ENCODE measurements at regions of chr19 and their contacts with region 1.

Region 1: GRCh38 chr19:12806239-12807081 is at the start of gene RNASEH2A:
- DNase-seq: peak; percentile 97
- H3K4me3 Mint-ChIP-seq: peak within 1 kb of the TSS; percentile 96
- H3K27ac Mint-ChIP-seq: peak within 1 kb of the TSS; percentile 89
- H3K4me1 Mint-ChIP-seq: peaks cover 20% of the 10 kb centered on the region
- H3K27me3 Mint-ChIP-seq: no peaks in the 10 kb centered on the region
- total RNA-seq, gene RNASEH2A: 35.8 and 51.5 TPM in 2 replicates

Region 2: GRCh38 chr19:12736995-12737834 is 69.2 kb before region 1 on chr19 and contains the start of gene GET3:
- intact Hi-C with region 1: loop called (anchors 1 kb)
- DNase-seq: peak; percentile 94
- H3K4me3 Mint-ChIP-seq: peak within 1 kb of the TSS; percentile 100
- H3K27ac Mint-ChIP-seq: peak within 1 kb of the TSS; percentile 98
- H3K4me1 Mint-ChIP-seq: peaks cover 38% of the 10 kb centered on the region
- H3K27me3 Mint-ChIP-seq: no peaks in the 10 kb centered on the region
- total RNA-seq, gene GET3: 64.6 and 67.3 TPM in 2 replicates

Region 3: GRCh38 chr19:12867120-12868099 is 61.0 kb after region 1 on chr19:
- intact Hi-C with region 1: no loop called
- DNase-seq: peak; percentile 93
- H3K4me3 Mint-ChIP-seq: peak overlapping the region; percentile 77
- H3K27ac Mint-ChIP-seq: peak overlapping the region; percentile 16
- H3K4me1 Mint-ChIP-seq: peaks cover 8% of the 10 kb centered on the region
- H3K27me3 Mint-ChIP-seq: peaks cover 2% of the 10 kb centered on the region

Measured in activated CD4-positive, alpha-beta T cell treated with anti-CD3 and anti-CD28 coated beads, Interleukin-2, amount 10 ng/mL, durations not matched to agents 24 days and 14 days (primary cell).